ENCODE measurements at regions of chr1 and their contacts with region 1.

Region 1: DNA sequence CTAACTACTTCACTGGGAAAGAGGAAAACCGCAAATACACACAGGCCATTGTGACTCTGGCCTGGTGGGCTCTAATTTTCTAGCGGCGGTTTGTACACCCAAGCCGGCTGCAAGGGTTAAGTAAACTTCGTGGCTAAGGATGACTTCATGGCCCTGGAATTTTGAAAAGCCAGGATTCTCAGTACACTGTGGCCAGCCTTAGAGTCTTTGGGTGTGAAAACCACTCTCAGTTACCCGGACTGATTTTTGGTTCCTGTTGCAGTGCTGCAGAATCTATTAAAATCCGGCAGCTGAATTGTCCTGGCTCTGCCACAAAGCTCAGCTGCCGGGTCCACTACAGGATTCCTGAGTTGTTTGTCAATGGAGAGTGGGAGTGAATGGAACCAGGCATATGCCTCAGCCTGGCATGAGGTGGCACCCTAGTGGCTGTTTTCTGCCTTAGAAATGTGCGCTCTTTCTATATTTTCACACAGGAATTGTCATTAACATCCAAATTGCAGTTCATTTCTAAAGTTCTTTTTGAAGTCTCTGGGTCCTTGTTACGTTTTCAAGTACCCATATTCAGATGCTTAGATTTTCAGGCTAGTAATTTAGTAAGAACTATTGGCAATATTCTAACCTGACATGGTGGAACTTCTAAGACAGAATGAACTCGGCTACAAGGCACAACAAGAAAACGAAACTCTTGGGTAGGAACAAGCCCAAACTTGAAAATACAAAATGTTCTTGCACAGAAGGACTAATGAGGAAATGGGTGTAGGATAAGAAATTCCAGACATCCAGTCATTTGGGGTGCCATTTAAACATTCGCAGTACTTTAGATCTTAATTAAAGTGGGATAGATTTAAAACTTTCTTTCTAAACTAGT is 255.9 kb downstream of the NFIA start:
- DNase-seq: peak; percentile 79 to 92
- H3K4me3 ChIP-seq: peak overlapping the region; percentile 12; the same call in 1 of the 2 replicates
- H3K27ac ChIP-seq: peak overlapping the region; percentile 69
- H3K4me1 ChIP-seq: peaks cover 31% of the 10 kb centered on the region
- H3K27me3 ChIP-seq: no peaks in the 10 kb centered on the region
- CTCF ChIP-seq: peak; percentile 77

Region 2: GRCh38 chr1:60848583-60849188 is 489.5 kb before region 1 on chr1:
- CTCF ChIA-PET with region 1: no interaction called
- POLR2A ChIA-PET with region 1: no interaction called
- intact Hi-C with region 1: loop called (anchors 1 kb)
- DNase-seq: peak in 1 of 2 experiments; percentile 8
- H3K4me3 ChIP-seq: no peak overlapping the region
- H3K27ac ChIP-seq: no peak overlapping the region
- H3K4me1 ChIP-seq: no peaks in the 10 kb centered on the region
- H3K27me3 ChIP-seq: no peaks in the 10 kb centered on the region
- CTCF ChIP-seq: peak; percentile 87

Region 3: DNA sequence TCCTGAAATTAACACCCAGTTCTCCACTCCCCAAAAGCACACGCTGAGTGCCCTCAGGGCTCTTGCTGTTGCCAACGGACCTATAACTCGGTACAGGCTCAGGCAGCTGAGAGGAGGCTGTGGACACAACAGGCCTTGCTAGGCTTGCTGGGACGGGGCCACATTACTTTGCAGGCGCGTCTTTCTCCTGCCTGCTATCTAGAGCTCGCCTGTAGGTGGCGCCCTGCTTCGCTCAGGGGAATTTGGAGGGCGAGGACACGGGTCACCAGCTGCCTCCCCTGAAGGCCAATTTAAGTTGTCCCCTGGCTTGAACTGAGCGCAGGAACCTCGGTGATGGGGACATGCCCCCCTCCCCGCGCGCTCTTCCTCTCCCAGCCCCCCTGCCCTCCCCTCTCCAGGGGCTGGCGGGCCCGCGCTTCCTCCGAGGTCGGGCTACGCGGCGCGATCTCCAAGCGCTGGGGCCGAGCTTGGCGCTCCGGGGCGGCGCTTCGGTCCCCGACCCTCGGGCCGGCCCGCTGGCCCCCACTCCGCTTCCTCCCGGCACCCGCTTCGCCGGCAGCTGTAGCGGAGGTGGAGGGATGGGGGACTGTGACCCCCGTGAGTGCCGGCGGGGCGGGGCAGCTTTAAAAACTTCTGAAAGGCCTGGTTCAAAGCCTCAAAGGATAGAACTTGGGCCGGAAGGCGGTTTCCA is 288.2 kb before region 1 on chr1:
- CTCF ChIA-PET with region 1: interaction called, 4 read pairs
- POLR2A ChIA-PET with region 1: no interaction called
- intact Hi-C with region 1: loop called (anchors 1 kb)
- DNase-seq: peak; percentile 77 to 91
- H3K4me3 ChIP-seq: peak overlapping the region; percentile 88
- H3K27ac ChIP-seq: no peak overlapping the region
- H3K4me1 ChIP-seq: peaks cover 4% of the 10 kb centered on the region; the same call in 1 of the 2 replicates
- H3K27me3 ChIP-seq: no peaks in the 10 kb centered on the region
- CTCF ChIP-seq: peak; percentile 93

Region 4: GRCh38 chr1:61141288-61142042 is 196.8 kb before region 1 on chr1:
- CTCF ChIA-PET with region 1: no interaction called
- POLR2A ChIA-PET with region 1: no interaction called
- intact Hi-C with region 1: loop called (anchors 2 kb)
- DNase-seq: peak; percentile 35 to 93
- H3K4me3 ChIP-seq: peak overlapping the region; percentile 16; the same call in 1 of the 2 replicates
- H3K27ac ChIP-seq: peak overlapping the region; percentile 89
- H3K4me1 ChIP-seq: peaks cover 59% of the 10 kb centered on the region
- H3K27me3 ChIP-seq: no peaks in the 10 kb centered on the region
- CTCF ChIP-seq: no peak

Region 5: DNA sequence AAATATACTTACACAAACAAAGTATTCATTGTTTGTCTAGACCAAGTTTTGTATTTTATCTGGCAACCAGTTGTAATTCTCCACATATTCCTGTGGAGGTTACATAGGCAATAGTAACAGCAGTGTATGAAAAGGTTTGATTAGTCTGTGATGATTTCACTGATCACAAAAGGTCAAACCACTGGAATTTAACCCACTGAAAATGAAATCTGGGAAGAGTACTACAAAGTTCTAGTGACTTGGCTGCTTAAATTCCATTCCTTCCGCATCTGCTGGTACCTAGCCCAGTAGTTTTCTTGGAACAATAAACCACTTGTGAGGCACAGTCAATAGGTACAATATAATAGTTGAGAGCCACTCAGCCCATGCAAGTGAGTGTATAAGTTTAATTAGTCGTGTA is 50.5 kb before region 1 on chr1:
- CTCF ChIA-PET with region 1: interaction called, 7 read pairs
- POLR2A ChIA-PET with region 1: no interaction called
- intact Hi-C with region 1: loop called (anchors 5 kb)
- DNase-seq: peak in 1 of 2 experiments; percentile 60
- H3K4me3 ChIP-seq: no peak overlapping the region
- H3K27ac ChIP-seq: peak overlapping the region; percentile 17; the same call in 1 of the 2 replicates
- H3K4me1 ChIP-seq: peaks cover 42% of the 10 kb centered on the region
- H3K27me3 ChIP-seq: no peaks in the 10 kb centered on the region
- CTCF ChIP-seq: no peak

Region 6: GRCh38 chr1:61641578-61642336 is 303.5 kb after region 1 on chr1:
- CTCF ChIA-PET with region 1: no interaction called
- POLR2A ChIA-PET with region 1: no interaction called
- intact Hi-C with region 1: loop called (anchors 2 kb)
- DNase-seq: peak in 1 of 2 experiments; percentile 37
- H3K4me3 ChIP-seq: no peak overlapping the region
- H3K27ac ChIP-seq: peak overlapping the region; percentile 59
- H3K4me1 ChIP-seq: peaks cover 48% of the 10 kb centered on the region
- H3K27me3 ChIP-seq: no peaks in the 10 kb centered on the region
- CTCF ChIP-seq: no peak

Measured in PC-9 (cell line).